RWPE1 (cell line): ENCODE measurements at regions of chr3 and their contacts with region 1.

Region 1: DNA sequence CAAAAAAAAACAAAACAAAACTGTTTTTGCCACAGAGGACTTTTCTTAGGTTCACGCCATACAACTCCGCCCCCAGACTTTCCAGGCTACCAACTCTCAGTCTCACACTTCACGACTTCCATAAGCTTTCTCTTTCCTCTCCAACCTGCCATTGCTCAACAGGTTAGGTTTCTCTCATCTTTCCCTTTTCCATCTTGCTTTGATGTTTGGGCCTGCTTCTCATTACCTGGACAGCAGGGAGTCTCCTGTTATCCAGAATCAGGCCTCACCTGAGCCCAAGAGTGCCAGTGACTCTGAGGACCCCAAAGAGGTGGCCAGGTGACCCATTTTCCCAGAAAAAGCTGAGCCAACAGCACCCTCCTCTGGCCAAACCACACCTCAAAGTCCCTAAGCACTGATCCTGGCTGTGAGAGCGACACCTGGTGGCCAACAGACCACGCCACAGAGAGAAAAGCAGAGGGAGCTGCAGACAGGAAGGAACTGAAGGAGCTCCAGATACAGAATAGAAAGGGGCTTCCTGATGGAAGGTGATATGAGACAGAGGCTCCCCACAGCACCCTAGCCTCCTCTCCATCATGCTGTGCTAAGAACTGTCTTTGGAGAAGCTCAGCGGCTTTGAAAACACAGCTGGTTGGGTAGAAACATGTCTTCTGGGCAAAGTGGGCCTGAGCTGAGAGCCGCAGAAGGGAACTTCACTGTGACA is 4.0 kb downstream of the CCDC51 start:
- DNase-seq: peak; percentile 66
- H3K27ac ChIP-seq: peak overlapping the region; percentile 99
- CTCF ChIP-seq: peak; percentile 98

Region 2: DNA sequence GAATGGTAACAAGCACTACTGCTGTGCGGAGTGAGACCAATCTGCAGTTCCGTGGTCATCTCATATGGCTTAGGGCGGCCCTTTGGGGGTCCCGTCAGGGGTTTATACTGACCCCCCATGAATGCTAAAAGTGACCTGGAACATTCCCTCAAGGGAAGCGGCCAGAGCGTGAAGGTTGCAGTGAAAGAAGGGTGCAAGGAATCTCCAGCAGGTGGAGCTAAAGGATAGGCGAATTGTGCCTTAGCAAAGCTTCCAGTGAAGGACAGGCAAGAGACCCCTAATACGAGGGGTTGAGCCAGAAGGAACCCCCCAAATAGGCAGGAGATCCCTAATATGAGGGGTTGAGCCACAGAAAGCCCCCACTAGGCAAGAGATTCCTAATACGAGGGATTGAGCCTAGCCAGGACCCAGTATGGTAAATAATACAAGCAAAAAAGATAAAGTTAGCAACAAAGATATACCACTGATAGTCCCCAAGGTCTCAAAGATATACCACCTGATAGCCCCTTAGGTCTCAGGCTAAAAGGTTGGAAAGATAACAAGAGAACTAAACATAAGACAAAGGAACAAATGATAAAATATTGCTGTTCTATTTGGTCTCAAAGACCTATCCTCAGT is 162.2 kb before region 1 on chr3:
- CTCF ChIA-PET with region 1: interaction called, 25 read pairs
- POLR2A ChIA-PET with region 1: no interaction called
- DNase-seq: peak; percentile 51
- H3K27ac ChIP-seq: no peak overlapping the region
- CTCF ChIP-seq: peak; percentile 80

Region 3: GRCh38 chr3:48400824-48401433 is 35.0 kb before region 1 on chr3:
- CTCF ChIA-PET with region 1: interaction called, 68 read pairs
- POLR2A ChIA-PET with region 1: interaction called, 4 read pairs
- DNase-seq: peak; percentile 68
- H3K27ac ChIP-seq: peak overlapping the region; percentile 99
- CTCF ChIP-seq: peak; percentile 78

Region 4: DNA sequence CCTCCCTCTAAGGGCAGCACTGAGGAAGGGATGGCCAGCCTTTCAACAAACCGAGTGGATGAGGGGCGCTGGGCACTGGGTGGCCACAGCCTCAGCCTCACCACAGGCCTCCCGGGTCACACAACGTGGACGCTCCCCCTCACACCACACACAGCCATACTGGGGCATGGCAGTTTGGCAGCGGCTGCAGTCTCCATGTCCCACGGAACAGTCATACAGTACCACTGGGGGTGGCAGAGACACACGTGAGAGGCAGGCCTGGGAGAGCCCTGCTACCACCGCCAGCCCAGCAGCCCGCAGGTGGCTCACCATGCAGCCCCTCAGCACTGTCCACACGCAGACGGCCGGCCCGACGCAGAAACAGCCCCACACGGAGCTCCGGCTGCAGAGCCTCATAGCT is 17.8 kb before region 1 on chr3:
- CTCF ChIA-PET with region 1: interaction called, 11 read pairs
- POLR2A ChIA-PET with region 1: no interaction called
- DNase-seq: no peak
- H3K27ac ChIP-seq: peak overlapping the region; percentile 99
- CTCF ChIP-seq: no peak

Region 5: GRCh38 chr3:48528754-48529153 is 92.8 kb after region 1 on chr3:
- CTCF ChIA-PET with region 1: no interaction called
- POLR2A ChIA-PET with region 1: no interaction called
- DNase-seq: no peak
- H3K27ac ChIP-seq: no peak overlapping the region
- CTCF ChIP-seq: no peak